SK-N-SH (cell line): ENCODE measurements at regions of chr9 and their contacts with region 1.

Region 1: DNA sequence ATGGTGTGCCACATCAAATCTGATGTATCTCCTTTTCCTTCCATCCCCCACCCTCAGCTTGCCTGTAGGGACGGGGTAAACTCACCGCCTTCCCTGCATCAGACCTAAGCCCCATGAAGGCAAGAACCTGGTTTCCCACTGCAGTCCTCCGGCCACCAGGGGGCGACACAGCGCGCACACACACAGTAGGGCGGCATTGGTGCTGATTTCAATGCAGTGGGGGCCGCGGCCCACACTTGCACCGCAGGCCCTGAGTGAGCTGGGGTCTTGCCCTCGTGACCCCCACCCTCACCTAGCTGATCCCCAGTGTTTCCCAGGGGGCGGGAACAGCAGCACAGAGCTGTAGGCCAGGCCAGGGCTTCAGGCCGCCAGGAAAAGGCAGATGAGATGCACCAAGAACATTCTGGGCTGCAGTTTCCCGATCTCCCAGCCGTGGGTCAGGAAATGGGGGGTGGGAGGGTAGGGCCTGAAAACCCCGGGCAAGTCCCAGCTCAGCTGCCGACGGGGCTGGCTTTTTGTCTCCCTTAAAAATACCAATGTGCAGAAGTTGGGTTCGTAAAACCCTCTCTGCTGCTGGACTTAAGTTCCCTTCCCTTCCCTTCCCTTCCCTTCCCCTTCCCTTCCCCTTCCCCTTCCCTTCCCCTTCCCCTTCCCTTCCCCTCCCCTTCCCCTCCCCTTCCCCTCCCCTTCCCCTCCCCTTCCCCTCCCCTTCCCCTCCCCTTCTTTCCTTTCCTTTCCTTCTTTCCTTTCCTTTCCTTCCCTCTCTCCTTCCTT is 19.5 kb downstream of the FAM163B start:
- DNase-seq: no peak
- H3K4me3 ChIP-seq: no peak overlapping the region
- H3K27ac ChIP-seq: peak overlapping the region in 1 of 2 experiments; percentile 39; a peak in 1 of 4 replicates
- H3K4me1 ChIP-seq: peaks cover 0 to 69% of the 10 kb centered on the region in 2 experiments; a peak in 3 of 4 replicates
- H3K27me3 ChIP-seq: peaks cover 19% of the 10 kb centered on the region
- CTCF ChIP-seq: peak; percentile 49
- EP300 ChIP-seq: no peak
- RAD21 ChIP-seq: no peak

Region 2: GRCh38 chr9:133564451-133565116 is 25.1 kb before region 1 on chr9:
- CTCF ChIA-PET with region 1: no interaction called
- POLR2A ChIA-PET with region 1: no interaction called
- DNase-seq: no peak
- H3K4me3 ChIP-seq: no peak overlapping the region
- H3K27ac ChIP-seq: peak overlapping the region in 1 of 2 experiments; percentile 39; a peak in 1 of 4 replicates
- H3K4me1 ChIP-seq: peaks cover 0 to 55% of the 10 kb centered on the region in 2 experiments; a peak in 2 of 4 replicates
- H3K27me3 ChIP-seq: 0 out of 2 replicates have a peak, but pooled peaks cover 10% of the 10 kb centered on the region
- CTCF ChIP-seq: no peak
- EP300 ChIP-seq: no peak
- RAD21 ChIP-seq: no peak

Region 3: DNA sequence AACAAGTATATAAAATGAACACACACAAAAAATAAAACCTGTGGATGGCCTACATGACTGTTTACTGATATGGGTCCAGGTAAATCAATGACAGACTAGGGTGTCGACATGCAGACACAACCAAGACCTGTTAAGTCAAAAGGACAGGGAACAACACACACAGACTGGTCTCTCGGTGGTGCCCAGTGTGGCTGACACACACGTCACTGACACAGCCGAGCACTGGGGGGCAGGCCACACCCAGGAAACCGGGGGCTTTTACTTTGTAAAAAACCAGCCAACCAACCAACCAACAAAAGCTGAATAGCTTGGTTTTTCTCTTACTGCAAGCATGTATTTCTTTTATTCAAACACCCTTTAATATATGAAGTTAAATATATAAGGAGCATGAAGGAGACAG is 14.6 kb after region 1 on chr9:
- CTCF ChIA-PET with region 1: interaction called, 102 read pairs
- POLR2A ChIA-PET with region 1: interaction called, 4 read pairs
- DNase-seq: peak; percentile 64
- H3K4me3 ChIP-seq: no peak overlapping the region
- H3K27ac ChIP-seq: peak overlapping the region in 1 of 2 experiments; percentile 86; a peak in 2 of 4 replicates
- H3K4me1 ChIP-seq: peaks cover 0 to 74% of the 10 kb centered on the region in 2 experiments; a peak in 1 of 4 replicates
- H3K27me3 ChIP-seq: peaks cover 18% of the 10 kb centered on the region
- CTCF ChIP-seq: no peak
- EP300 ChIP-seq: no peak
- RAD21 ChIP-seq: peak; percentile 71

Region 4: GRCh38 chr9:133609311-133610098 is 19.9 kb after region 1 on chr9 and contains the start of gene FAM163B:
- CTCF ChIA-PET with region 1: interaction called, 102 read pairs
- POLR2A ChIA-PET with region 1: interaction called, 3 read pairs
- DNase-seq: peak; percentile 93
- H3K4me3 ChIP-seq: peak within 1 kb of the TSS in 1 of 2 experiments; percentile 46; a peak in 2 of 4 replicates
- H3K27ac ChIP-seq: peak within 1 kb of the TSS in 1 of 2 experiments; percentile 86; a peak in 2 of 4 replicates
- H3K4me1 ChIP-seq: peaks cover 0 to 71% of the 10 kb centered on the region in 2 experiments; a peak in 1 of 4 replicates
- H3K27me3 ChIP-seq: peaks cover 18% of the 10 kb centered on the region
- CTCF ChIP-seq: no peak
- EP300 ChIP-seq: no peak
- RAD21 ChIP-seq: no peak
- polyA plus RNA-seq, gene FAM163B: 0.05 and 0.15 TPM in 2 replicates